Ovary (tissue), 10 donors: ENCODE measurements at regions of chr15 and their contacts with region 1.

Region 1: GRCh38 chr15:68658151-68658550 is 79.4 kb downstream of the CORO2B start:
- DNase-seq: peak in 3 of 5 donors; percentile 32 to 46 (median 44)
- H3K4me3 ChIP-seq: no peak overlapping the region
- H3K27ac ChIP-seq: no peak overlapping the region
- H3K4me1 ChIP-seq: peaks cover 8% of the 10 kb centered on the region
- H3K27me3 ChIP-seq: no peaks in the 10 kb centered on the region
- CTCF ChIP-seq: no peak
- EP300 ChIP-seq: no peak
- POLR2A ChIP-seq: no peak

Region 2: GRCh38 chr15:67178569-67179210 is 1479.5 kb before region 1 on chr15:
- intact Hi-C with region 1: no loop called
- DNase-seq: peak in 3 of 5 donors; percentile 24 to 76 (median 45)
- H3K4me3 ChIP-seq: no peak overlapping the region
- H3K27ac ChIP-seq: peak overlapping the region in 1 of 2 donors; percentile 17
- H3K4me1 ChIP-seq: peaks cover 14% of the 10 kb centered on the region
- H3K27me3 ChIP-seq: no peaks in the 10 kb centered on the region
- CTCF ChIP-seq: no peak
- EP300 ChIP-seq: no peak
- POLR2A ChIP-seq: no peak

Region 3: DNA sequence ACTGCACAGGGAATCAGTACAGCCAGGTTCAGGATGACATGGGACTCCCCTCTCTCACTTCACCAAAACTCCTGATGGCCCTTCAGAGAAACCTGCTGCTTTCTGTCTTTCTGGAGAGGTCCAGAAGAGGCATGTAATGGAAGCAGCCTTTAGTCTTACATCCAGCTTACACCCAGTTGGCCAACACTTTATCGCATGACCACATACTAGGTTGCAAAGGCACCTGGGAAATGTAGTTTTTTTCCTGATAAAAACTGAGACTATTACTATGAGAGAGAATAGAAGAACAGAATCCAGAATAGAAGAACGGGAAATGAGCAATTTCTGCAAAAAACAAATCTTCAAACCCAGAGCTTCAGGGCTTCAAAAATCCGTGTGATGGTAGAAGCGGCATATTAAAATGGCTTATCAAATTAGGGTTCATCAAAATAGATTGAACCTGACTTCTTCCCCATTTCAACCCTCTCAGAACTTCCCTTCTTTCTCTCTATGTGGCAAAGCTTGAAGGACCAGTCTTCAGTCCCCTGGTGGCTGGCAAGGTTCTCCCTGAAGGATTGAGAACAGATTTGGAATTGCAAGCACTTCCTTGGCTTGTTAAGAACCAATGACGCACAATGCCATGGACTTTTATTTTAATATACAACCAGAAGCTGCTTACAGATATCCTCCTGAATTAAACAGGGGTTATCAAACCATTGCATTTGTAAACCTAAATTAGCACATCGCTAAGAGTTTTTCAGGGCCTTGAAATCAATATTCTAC is 45.0 kb before region 1 on chr15:
- intact Hi-C with region 1: loop called in 1 of 4 experiments (anchors 2 kb)
- DNase-seq: no peak
- H3K4me3 ChIP-seq: no peak overlapping the region
- H3K27ac ChIP-seq: no peak overlapping the region
- H3K4me1 ChIP-seq: peaks cover 36% of the 10 kb centered on the region
- H3K27me3 ChIP-seq: no peaks in the 10 kb centered on the region
- CTCF ChIP-seq: no peak
- EP300 ChIP-seq: no peak
- POLR2A ChIP-seq: no peak

Region 4: DNA sequence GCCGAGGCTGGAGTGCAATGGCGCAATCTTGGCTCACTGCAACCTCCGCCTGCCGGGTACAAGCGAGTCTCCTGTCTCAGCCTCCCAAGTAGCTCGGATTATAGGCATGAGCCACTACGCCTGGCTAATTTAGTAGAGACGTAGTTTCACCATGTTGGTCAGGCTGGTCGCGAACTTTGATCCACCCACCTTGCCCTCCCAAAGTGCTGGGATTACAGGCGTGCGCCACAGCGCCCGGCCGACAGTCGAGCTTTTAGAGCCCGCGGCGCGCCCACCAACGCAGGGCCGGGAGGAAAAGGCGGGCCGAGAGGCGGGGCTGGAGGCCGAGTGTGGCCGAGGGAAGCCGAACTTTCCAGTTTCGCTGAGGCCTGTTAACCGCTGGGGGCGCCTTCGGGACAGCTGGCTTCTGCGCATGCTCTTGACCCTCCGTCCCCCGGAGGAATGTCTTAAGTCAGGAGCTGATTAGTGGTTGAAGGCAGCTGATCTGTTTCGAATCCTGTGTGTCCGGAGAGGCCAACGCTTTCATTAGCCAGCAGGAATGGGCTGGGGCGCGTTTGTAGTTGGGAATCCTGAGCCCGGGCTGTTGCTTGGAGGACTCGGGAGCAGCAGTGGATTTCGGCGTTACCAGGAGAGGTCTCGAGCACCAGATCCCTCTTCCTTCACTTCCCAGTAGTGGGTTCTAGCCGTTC is 804.5 kb after region 1 on chr15:
- intact Hi-C with region 1: no loop called
- DNase-seq: peak; percentile 95 to 98 (median 97)
- H3K4me3 ChIP-seq: peak overlapping the region; percentile 46
- H3K27ac ChIP-seq: peak overlapping the region; percentile 77 to 82
- H3K4me1 ChIP-seq: peaks cover 2% of the 10 kb centered on the region
- H3K27me3 ChIP-seq: no peaks in the 10 kb centered on the region
- CTCF ChIP-seq: peak; percentile 95 to 96 (median 96)
- EP300 ChIP-seq: no peak
- POLR2A ChIP-seq: no peak